GM12878 (cell line): ENCODE measurements at regions of chr20 and their contacts with region 1.

Region 1: DNA sequence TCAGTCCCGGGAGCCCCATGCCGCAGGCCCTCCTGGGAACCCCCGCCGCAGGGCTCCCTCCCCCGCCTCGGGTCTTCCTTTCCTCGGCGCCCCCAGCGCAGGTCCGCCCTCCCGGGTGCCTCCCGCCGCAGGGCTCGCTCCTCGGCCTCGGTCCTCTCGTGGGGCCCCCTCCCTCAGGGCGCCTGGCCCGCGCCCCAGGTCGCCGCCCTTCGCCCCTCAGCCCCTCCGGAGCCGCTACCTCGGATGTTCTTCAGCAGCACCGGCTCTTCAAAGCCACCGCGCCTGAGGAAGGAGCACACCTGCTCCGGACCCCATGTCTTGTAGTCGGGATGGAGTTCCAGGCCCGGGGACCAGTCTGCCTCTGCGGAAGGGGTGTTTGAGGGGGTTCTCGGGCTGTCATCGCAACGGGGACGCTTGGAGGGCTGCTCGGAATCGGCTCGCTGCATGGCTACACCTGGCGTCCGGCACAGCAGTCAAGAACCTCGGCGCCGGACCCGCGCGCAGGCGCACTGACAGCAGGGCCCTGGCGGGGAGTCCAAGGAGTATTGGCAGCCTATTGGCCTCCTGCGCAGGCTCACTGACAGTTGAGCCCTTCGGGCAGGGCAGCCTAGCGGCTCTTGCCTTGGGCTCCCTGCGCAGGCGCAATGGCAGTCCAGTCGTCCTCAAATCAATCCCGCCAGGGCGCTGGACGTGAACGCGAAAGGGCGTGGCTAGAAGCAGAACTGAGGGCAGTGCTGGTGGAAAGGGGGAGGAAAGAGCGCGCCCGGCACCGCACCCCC is at the start of gene SAMHD1:
- DNase-seq: peak; percentile 96
- ATAC-seq: peak; percentile 96
- H3K4me3 ChIP-seq: peak within 1 kb of the TSS; percentile 96
- H3K27ac ChIP-seq: peak within 1 kb of the TSS; percentile 78
- H3K4me1 ChIP-seq: peaks cover 5% of the 10 kb centered on the region
- H3K27me3 ChIP-seq: no peaks in the 10 kb centered on the region
- CTCF ChIP-seq: no peak
- EP300 ChIP-seq: no peak
- POLR2A ChIP-seq: peak; percentile 75
- RAD21 ChIP-seq: no peak
- polyA plus RNA-seq, gene SAMHD1: 20.5 to 21.7 TPM

Region 2: DNA sequence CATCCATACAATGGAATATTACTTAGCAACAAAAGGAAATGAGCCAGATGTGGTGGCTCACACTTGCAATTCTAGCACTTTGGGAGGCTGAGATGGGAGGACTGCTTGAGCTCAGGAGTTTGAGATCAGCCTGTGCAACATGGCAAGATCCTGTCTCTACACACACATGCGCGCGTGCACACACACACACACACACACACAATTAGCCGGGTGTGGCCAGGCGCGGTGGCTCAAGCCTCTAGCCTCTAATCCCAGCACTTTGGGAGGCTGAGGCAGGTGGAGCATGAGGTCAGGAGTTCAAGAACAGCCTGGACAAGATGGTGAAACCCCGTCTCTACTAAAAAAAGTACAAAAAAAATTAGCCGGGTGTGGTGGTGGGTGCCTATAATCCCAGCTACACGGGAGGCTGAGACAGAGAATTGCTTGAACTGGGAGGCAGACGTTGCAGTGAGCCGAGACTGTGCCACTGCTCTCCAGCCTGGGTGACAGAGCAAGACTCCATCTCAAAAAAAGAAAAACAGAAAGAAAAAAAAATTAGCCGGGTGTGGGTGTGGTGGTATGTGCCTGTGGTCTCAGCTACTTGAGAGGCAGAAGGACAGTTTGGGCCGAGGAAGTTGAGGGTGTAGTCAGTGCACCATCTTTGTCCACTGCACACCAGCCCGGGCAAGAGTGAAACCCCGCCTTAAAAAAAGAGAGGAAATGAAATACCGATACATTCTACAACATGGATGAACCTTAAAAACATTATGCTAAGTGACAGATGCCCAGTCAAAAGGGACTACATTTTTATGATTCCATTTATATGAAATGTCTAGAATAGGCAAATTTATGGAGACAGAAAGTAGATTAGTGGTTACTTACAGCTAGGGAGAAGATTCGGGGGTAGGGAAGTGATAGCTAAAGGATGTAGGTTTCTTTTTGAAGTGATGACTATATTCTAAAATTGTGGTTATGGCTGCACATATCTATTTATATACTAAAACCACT is 91.9 kb after region 1 on chr20:
- CTCF ChIA-PET with region 1: no interaction called
- POLR2A ChIA-PET with region 1: interaction called, 4 read pairs
- RAD21 ChIA-PET with region 1: no interaction called
- SMC1A ChIA-PET with region 1: no interaction called
- in situ Hi-C with region 1: no loop called
- intact Hi-C with region 1: loop called (anchors 2 kb)
- DNase-seq: peak; percentile 70
- ATAC-seq: peak; percentile 85
- H3K4me3 ChIP-seq: peak overlapping the region; percentile 58; the same call in 1 of the 2 replicates
- H3K27ac ChIP-seq: peak overlapping the region; percentile 87
- H3K4me1 ChIP-seq: peaks cover 18% of the 10 kb centered on the region
- H3K27me3 ChIP-seq: no peaks in the 10 kb centered on the region
- CTCF ChIP-seq: no peak
- EP300 ChIP-seq: no peak
- POLR2A ChIP-seq: 0 out of 2 replicates have a peak, but pooled peaks have one; percentile 17
- RAD21 ChIP-seq: no peak

Region 3: DNA sequence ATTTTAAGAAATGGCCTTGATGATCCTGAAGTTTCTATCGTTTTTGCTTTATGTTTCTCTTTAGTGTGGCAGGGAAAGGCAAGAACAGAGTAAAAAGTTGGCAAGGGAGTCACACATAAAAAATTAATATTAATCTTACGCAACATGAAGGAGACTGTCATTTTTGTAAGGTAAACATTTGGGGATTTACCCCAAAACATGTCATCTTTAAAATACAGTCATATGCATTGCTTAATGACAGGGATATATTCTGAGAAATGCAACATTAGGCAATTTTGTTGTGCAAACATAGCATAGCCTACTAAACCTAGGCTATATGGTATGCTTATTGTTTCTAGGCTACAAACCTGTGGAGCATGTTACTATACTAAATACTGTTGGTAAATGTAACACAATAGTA is 139.0 kb after region 1 on chr20:
- CTCF ChIA-PET with region 1: no interaction called
- POLR2A ChIA-PET with region 1: interaction called, 4 read pairs
- RAD21 ChIA-PET with region 1: no interaction called
- SMC1A ChIA-PET with region 1: no interaction called
- in situ Hi-C with region 1: no loop called
- intact Hi-C with region 1: loop called (anchors 5 kb)
- DNase-seq: no peak
- ATAC-seq: no peak
- H3K4me3 ChIP-seq: no peak overlapping the region
- H3K27ac ChIP-seq: no peak overlapping the region
- H3K4me1 ChIP-seq: peaks cover 8% of the 10 kb centered on the region
- H3K27me3 ChIP-seq: no peaks in the 10 kb centered on the region
- CTCF ChIP-seq: no peak
- EP300 ChIP-seq: no peak
- POLR2A ChIP-seq: no peak
- RAD21 ChIP-seq: no peak

Region 4: DNA sequence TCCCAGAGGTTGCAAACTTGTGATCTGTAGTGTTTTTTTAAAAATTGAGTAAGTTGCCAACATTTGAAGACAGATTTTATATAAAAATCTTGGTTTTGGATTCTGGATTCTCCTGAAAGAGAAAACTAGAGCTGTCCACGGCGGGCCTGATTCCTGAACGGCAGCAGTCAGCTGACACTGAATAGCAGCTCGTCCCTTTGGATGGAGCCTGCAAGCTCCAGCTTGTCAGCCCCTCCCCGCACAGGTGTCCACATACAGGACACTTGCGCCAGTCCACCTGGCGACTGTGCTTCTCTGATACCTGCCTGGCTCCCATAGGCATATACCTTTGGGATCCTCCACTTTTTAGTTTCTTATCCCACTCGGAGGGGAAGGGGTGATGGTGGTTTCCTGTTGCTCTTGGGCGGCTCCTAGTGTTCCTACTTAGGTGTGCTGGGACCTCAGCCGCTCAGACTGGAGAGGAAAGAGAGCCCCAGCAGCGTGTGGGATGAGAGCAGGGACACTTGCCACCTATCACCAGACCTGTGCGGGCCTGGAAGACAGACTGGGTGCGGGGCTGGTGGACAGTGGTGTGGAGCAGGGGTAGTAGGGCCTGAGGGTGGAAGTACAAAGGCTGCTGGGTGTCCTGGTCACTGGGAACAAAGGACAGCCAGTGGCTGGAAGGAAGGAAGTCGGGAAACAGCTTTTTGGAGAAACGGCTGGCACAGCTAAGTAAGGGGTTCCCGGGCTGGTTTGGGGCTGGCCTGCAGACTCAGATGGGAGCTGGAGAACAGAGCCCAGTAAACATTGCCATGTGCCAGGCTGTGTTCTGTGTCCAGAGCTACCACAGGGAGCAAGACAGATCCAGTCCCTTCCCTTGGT is 291.9 kb after region 1 on chr20:
- CTCF ChIA-PET with region 1: no interaction called
- POLR2A ChIA-PET with region 1: no interaction called
- RAD21 ChIA-PET with region 1: no interaction called
- SMC1A ChIA-PET with region 1: no interaction called
- in situ Hi-C with region 1: no loop called
- intact Hi-C with region 1: no loop called
- DNase-seq: no peak
- ATAC-seq: no peak
- H3K4me3 ChIP-seq: no peak overlapping the region
- H3K27ac ChIP-seq: no peak overlapping the region
- H3K4me1 ChIP-seq: no peaks in the 10 kb centered on the region
- H3K27me3 ChIP-seq: no peaks in the 10 kb centered on the region
- CTCF ChIP-seq: no peak
- EP300 ChIP-seq: no peak
- POLR2A ChIP-seq: 0 out of 2 replicates have a peak, but pooled peaks have one; percentile 21
- RAD21 ChIP-seq: no peak